CD8-positive, alpha-beta memory T cell (primary cell): ENCODE measurements at regions of chr12 and their contacts with region 1.

Region 1: GRCh38 chr12:12813120-12814101 is at the start of gene DDX47:
- DNase-seq: peak; percentile 92 to 97 (median 95)
- H3K4me3 ChIP-seq: peak within 1 kb of the TSS; percentile 99
- H3K4me3 Mint-ChIP-seq: peak within 1 kb of the TSS; percentile 87 to 100 (median 94)
- H3K27ac ChIP-seq: peak within 1 kb of the TSS; percentile 81
- H3K27ac Mint-ChIP-seq: peak within 1 kb of the TSS; percentile 76 to 100 (median 98)
- H3K4me1 ChIP-seq: peaks cover 49% of the 10 kb centered on the region
- H3K4me1 Mint-ChIP-seq: peaks cover 50 to 68% (median 62%) of the 10 kb centered on the region in 3 donors
- H3K27me3 ChIP-seq: no peaks in the 10 kb centered on the region
- H3K27me3 Mint-ChIP-seq: no peaks in the 10 kb centered on the region
- total RNA-seq, gene DDX47: 105 to 106 TPM

Region 2: GRCh38 chr12:12645485-12645884 is 167.9 kb before region 1 on chr12:
- CTCF ChIA-PET with region 1: no interaction called
- POLR2A ChIA-PET with region 1: no interaction called
- DNase-seq: peak; percentile 4 to 67 (median 61)
- H3K4me3 ChIP-seq: no peak overlapping the region
- H3K4me3 Mint-ChIP-seq: peak overlapping the region in 1 of 7 donors; percentile 32
- H3K27ac ChIP-seq: no peak overlapping the region
- H3K27ac Mint-ChIP-seq: peak overlapping the region in 4 of 8 donors; percentile 15 to 27 (median 22)
- H3K4me1 ChIP-seq: no peaks in the 10 kb centered on the region
- H3K4me1 Mint-ChIP-seq: peaks cover 7 to 8% (median 7%) of the 10 kb centered on the region in 3 donors
- H3K27me3 ChIP-seq: no peaks in the 10 kb centered on the region
- H3K27me3 Mint-ChIP-seq: no peaks in the 10 kb centered on the region

Region 3: DNA sequence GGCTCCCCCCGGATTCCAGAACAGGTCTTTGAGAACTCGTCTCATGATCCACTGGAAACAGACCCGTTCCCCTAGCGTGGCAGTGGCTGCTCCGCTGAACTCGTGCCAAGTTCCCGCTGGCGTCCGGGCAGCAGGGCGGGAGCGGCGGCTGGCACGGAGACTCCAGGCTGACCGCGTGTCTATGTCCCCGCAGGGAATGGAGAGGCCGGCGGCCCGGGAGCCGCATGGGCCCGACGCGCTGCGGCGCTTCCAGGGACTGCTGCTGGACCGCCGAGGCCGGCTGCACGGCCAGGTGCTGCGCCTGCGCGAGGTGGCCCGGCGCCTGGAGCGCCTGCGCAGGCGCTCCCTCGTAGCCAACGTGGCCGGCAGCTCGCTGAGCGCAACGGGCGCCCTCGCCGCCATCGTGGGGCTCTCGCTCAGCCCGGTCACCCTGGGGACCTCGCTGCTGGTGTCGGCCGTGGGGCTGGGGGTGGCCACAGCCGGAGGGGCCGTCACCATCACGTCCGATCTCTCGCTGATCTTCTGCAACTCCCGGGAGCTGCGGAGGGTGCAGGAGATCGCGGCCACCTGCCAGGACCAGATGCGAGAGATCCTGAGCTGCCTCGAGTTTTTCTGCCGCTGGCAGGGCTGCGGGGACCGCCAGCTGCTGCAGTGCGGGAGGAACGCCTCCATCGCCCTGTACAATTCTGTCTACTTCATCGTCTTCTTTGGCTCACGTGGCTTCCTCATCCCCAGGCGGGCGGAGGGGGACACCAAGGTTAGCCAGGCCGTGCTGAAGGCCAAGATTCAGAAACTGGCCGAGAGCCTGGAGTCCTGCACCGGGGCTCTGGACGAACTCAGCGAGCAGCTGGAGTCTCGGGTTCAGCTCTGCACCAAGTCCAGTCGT is 26.5 kb before region 1 on chr12:
- CTCF ChIA-PET with region 1: interaction called, 31 read pairs
- POLR2A ChIA-PET with region 1: interaction called, 11 read pairs
- DNase-seq: peak; percentile 63 to 81 (median 73)
- H3K4me3 ChIP-seq: peak overlapping the region; percentile 89
- H3K4me3 Mint-ChIP-seq: peak overlapping the region; percentile 84 to 91 (median 88)
- H3K27ac ChIP-seq: peak overlapping the region; percentile 75
- H3K27ac Mint-ChIP-seq: peak overlapping the region; percentile 82 to 93 (median 88)
- H3K4me1 ChIP-seq: peaks cover 23% of the 10 kb centered on the region
- H3K4me1 Mint-ChIP-seq: peaks cover 6 to 27% (median 24%) of the 10 kb centered on the region in 3 donors
- H3K27me3 ChIP-seq: no peaks in the 10 kb centered on the region
- H3K27me3 Mint-ChIP-seq: peaks cover 3% of the 10 kb centered on the region in 2 donors

Region 4: GRCh38 chr12:12803186-12803585 is 10.2 kb before region 1 on chr12:
- CTCF ChIA-PET with region 1: interaction called, 17 read pairs
- POLR2A ChIA-PET with region 1: no interaction called
- DNase-seq: peak in 1 of 5 donors; percentile 52
- H3K4me3 ChIP-seq: no peak overlapping the region
- H3K4me3 Mint-ChIP-seq: peak overlapping the region in 1 of 7 donors; percentile 2
- H3K27ac ChIP-seq: no peak overlapping the region
- H3K27ac Mint-ChIP-seq: peak overlapping the region in 6 of 8 donors; percentile 3 to 74 (median 46)
- H3K4me1 ChIP-seq: peaks cover 22% of the 10 kb centered on the region
- H3K4me1 Mint-ChIP-seq: peaks cover 27 to 46% (median 31%) of the 10 kb centered on the region in 3 donors
- H3K27me3 ChIP-seq: no peaks in the 10 kb centered on the region
- H3K27me3 Mint-ChIP-seq: no peaks in the 10 kb centered on the region